ENCODE measurements at regions of chr20 and their contacts with region 1.

Region 1: DNA sequence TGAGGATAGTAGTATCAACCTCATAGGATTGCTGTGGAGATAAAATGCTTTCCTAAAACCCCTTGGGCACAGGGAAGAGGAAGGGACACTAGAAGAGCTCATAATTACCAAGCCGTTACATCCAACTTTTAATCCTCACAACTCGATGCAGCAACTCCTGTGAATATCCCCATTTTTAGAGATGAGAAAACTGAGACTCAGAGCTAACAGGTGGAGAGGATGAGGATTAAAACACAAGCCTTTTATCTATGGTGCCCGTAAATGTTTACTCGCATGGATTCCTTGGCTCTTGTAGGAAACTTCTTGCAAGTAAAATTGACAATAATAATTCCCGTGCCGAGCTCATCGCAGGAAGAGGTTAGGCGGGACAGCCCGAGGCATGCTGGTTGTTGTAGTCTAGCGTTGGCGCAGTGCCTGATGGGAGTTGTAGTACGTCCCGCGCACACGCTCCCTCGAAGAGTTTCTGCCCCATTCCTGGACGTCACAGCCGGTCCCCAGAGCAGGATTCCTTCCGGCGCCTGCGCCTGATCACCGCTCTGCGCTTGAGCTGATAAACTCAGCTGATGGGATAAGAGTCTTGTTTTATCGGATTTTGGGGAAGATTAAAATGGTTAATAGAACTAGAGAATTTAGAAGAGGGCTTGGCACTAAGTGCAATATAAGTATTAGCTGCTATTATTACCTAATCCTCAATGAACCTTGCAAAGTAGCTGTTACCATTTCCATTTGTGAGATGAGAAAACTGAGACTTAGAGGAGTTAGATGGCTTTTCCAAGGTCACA is 2.8 kb upstream of the UBE2V1 start:
- DNase-seq: peak; percentile 98
- H3K27ac ChIP-seq: peak overlapping the region; percentile 48
- CTCF ChIP-seq: no peak

Region 2: DNA sequence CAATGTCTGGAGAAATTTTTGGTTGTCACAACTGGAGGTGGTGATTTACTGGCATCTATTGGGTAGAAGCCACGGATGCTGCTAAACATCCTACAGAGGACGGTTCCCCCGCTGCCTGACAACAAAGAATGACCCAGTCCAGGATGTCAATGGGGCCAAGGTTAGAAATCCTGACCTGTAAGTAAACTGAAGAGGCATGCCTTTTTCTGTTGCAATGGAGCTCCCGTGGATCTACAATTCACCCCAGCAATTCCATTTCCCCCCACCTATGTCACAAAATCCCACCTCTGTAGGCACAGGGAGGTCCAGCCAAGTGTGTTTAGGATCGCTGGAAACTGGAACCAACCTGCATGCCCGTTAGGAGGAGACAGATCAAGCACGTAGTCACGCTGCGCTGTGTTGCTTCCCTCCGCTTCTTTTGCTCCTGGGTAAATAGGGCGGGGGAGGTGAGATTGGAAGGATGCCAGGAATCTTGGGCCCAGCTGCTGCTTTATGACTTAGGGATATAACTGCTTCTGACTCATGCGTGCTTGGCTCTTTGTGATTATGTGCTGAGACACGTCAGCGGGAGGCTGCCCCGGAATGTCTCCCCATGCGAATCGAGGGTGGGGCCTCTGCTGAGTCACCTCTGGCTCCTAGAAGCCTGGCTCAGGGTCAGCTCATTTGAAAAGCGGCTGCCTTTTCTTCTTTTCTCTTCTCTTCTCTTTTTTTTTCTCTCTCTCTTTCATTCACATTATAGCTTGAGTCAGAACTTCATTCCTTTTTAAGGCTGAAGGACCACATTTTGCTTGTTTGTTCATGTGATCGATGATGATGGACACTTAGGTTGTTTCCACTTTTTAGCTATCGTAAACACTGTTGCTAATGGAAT is 50.1 kb after region 1 on chr20:
- CTCF ChIA-PET with region 1: interaction called, 121 read pairs
- POLR2A ChIA-PET with region 1: interaction called, 3 read pairs
- DNase-seq: peak; percentile 100
- H3K27ac ChIP-seq: peak overlapping the region; percentile 94
- CTCF ChIP-seq: no peak